Ascending aorta (tissue), 2 donors: ENCODE measurements at regions of chr20 and their contacts with region 1.

Region 1: DNA sequence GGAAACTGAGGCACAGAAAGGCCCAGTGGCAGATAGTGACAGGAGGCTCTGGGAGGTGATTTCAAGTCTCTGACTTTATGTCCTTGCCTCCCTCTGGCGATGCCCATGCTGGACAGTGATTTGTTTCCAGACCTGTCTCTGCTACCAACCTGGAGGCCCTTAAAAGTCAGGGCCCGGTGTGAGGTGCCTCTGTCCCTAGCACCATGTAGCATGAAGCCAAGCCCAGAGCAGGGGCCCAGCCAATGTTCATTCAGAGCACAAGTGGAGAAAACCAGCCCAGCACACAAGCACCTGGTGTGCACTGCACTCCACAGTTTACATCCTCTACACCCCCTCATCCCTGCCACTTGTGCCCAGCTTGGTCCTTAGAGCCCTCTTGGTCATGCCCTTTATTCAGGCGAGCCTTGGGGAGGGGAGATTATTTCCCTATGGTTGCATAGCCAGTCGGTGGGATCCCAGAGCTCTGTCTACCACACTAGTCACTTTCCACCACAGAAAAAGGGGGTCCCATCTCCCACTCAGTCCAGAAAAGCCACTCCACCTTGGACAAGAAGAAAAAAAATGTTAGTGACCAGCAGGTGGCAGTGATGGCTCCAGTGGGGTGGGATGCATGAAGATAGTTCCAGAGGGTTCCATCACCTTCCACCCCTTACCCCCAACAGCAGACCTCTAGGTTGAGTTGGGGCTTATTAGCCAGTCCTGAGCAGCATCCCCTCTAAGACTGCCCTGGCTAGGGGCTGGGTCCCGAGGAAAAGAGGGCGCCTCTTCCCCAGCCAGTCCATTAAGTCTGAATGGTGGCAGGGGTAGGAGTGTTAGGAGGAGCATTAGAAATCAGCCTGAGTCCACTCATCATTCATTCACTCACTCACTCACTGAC is 30.9 kb downstream of the KIAA1755 start:
- DNase-seq: no peak
- H3K4me3 ChIP-seq: no peak overlapping the region
- H3K27ac ChIP-seq: no peak overlapping the region
- H3K4me1 ChIP-seq: no peaks in the 10 kb centered on the region
- H3K27me3 ChIP-seq: no peaks in the 10 kb centered on the region
- CTCF ChIP-seq: peak; percentile 48 to 67 (median 62)

Region 2: DNA sequence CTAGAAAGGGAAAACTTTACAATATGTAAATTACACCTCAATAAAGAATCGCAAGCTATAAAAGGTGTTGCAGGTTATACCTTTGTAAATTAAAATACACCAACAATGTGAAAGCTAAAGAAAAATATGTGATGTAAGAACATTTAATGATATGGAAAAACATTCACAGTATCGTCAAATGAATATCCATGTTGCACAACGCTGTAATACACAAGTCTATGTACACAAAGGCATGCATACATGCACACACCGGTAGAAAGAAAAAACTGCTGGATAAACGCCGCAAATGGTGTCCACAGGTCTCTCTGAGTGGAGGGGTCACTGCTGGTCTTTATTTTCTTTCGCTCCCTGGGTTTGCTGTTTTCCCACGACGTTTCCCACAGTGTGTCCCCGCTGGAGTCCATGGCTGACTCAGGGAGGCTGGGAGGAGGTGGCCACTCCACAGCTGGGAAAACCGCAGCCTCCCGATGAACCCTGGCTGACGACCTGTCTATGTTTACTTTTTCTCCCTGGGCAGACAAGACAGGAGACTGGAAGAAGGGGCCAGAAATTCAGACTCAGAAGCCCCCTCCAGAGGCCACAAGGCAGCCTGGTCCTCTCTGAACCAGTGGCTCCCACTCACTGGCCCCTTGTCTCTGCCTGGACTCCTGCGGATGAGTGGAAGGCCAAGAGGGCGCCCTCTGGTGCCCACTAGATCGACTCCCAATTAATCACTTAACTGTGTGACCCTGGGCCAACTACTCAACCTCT is 61.4 kb after region 1 on chr20:
- intact Hi-C with region 1: loop called (anchors 1 kb)
- DNase-seq: peak in 1 of 2 donors; percentile 64
- H3K4me3 ChIP-seq: no peak overlapping the region
- H3K27ac ChIP-seq: no peak overlapping the region
- H3K4me1 ChIP-seq: no peaks in the 10 kb centered on the region
- H3K27me3 ChIP-seq: no peaks in the 10 kb centered on the region
- CTCF ChIP-seq: peak; percentile 29 to 51 (median 44)

Region 3: GRCh38 chr20:38304845-38305447 is 75.3 kb after region 1 on chr20:
- intact Hi-C with region 1: no loop called
- DNase-seq: no peak
- H3K4me3 ChIP-seq: no peak overlapping the region
- H3K27ac ChIP-seq: no peak overlapping the region
- H3K4me1 ChIP-seq: no peaks in the 10 kb centered on the region
- H3K27me3 ChIP-seq: no peaks in the 10 kb centered on the region
- CTCF ChIP-seq: peak in 2 of 3 experiments; percentile 11 to 33

Region 4: GRCh38 chr20:38321959-38322598 is 92.5 kb after region 1 on chr20:
- intact Hi-C with region 1: loop called (anchors 1 kb)
- DNase-seq: no peak
- H3K4me3 ChIP-seq: no peak overlapping the region
- H3K27ac ChIP-seq: no peak overlapping the region
- H3K4me1 ChIP-seq: no peaks in the 10 kb centered on the region
- H3K27me3 ChIP-seq: no peaks in the 10 kb centered on the region
- CTCF ChIP-seq: peak; percentile 55 to 67 (median 60)

Region 5: GRCh38 chr20:38406476-38406875 is 176.9 kb after region 1 on chr20:
- intact Hi-C with region 1: loop called (anchors 5 kb)
- DNase-seq: no peak
- H3K4me3 ChIP-seq: no peak overlapping the region
- H3K27ac ChIP-seq: no peak overlapping the region
- H3K4me1 ChIP-seq: no peaks in the 10 kb centered on the region
- H3K27me3 ChIP-seq: no peaks in the 10 kb centered on the region
- CTCF ChIP-seq: no peak